B cell (primary cell): ENCODE measurements at regions of chr16 and their contacts with region 1.

Region 1: GRCh38 chr16:56700195-56700594 is 17.9 kb downstream of the MT1X start:
- DNase-seq: no peak
- ATAC-seq: no peak
- H3K4me3 ChIP-seq: no peak overlapping the region
- H3K4me3 Mint-ChIP-seq: no peak overlapping the region
- H3K27ac ChIP-seq: no peak overlapping the region
- H3K27ac Mint-ChIP-seq: no peak overlapping the region
- H3K4me1 ChIP-seq: peaks cover 0 to 4% of the 10 kb centered on the region in 2 donors
- H3K4me1 Mint-ChIP-seq: peaks cover 5% of the 10 kb centered on the region
- H3K27me3 ChIP-seq: peaks cover 0 to 1% (median 0%) of the 10 kb centered on the region in 4 experiments
- H3K27me3 Mint-ChIP-seq: peaks cover 3% of the 10 kb centered on the region
- CTCF ChIP-seq: no peak

Region 2: DNA sequence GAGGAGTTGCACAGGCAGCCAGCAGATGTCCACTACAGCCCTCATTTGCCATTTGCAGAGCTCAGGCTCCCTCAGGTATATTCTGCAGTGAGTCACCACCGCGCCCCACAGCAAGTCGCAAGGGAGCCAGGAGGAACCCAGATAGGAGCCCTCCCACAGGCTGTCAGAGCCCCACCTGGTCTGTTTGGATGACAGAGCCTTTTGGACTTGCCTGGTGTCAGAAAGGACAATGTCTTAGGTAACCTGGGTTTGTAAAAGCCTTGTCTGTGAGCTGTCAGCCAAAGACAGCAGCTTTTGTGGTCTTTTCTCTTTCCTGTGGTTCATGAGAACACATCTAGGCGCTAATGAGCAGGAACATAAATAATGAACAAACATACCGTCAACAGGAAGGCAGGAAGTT is 438.0 kb before region 1 on chr16:
- CTCF ChIA-PET with region 1: no interaction called
- POLR2A ChIA-PET with region 1: no interaction called
- intact Hi-C with region 1: no loop called
- DNase-seq: no peak
- ATAC-seq: no peak
- H3K4me3 ChIP-seq: no peak overlapping the region
- H3K4me3 Mint-ChIP-seq: no peak overlapping the region
- H3K27ac ChIP-seq: no peak overlapping the region
- H3K27ac Mint-ChIP-seq: no peak overlapping the region
- H3K4me1 ChIP-seq: peaks cover 0 to 5% of the 10 kb centered on the region in 2 donors
- H3K4me1 Mint-ChIP-seq: peaks cover 5% of the 10 kb centered on the region
- H3K27me3 ChIP-seq: peaks cover 0 to 7% (median 0%) of the 10 kb centered on the region in 4 experiments
- H3K27me3 Mint-ChIP-seq: peaks cover 9% of the 10 kb centered on the region
- CTCF ChIP-seq: no peak

Region 3: GRCh38 chr16:56356276-56357240 is 343.6 kb before region 1 on chr16:
- CTCF ChIA-PET with region 1: interaction called, 7 read pairs
- POLR2A ChIA-PET with region 1: no interaction called
- intact Hi-C with region 1: loop called (anchors 1 kb)
- DNase-seq: peak; percentile 67
- ATAC-seq: peak; percentile 81
- H3K4me3 ChIP-seq: peak overlapping the region; percentile 32 to 75 (median 50)
- H3K4me3 Mint-ChIP-seq: peak overlapping the region; percentile 93
- H3K27ac ChIP-seq: peak overlapping the region in 1 of 2 donors; percentile 69
- H3K27ac Mint-ChIP-seq: peak overlapping the region; percentile 46
- H3K4me1 ChIP-seq: peaks cover 4 to 14% of the 10 kb centered on the region in 2 donors
- H3K4me1 Mint-ChIP-seq: peaks cover 21% of the 10 kb centered on the region
- H3K27me3 ChIP-seq: no peaks in the 10 kb centered on the region
- H3K27me3 Mint-ChIP-seq: peaks cover 3% of the 10 kb centered on the region
- CTCF ChIP-seq: peak; percentile 86

Region 4: GRCh38 chr16:56519459-56520250 is 180.5 kb before region 1 on chr16 and contains the start of gene BBS2:
- CTCF ChIA-PET with region 1: interaction called, 50 read pairs
- POLR2A ChIA-PET with region 1: interaction called, 3 read pairs
- intact Hi-C with region 1: no loop called
- DNase-seq: peak; percentile 94
- ATAC-seq: peak; percentile 90
- H3K4me3 ChIP-seq: peak within 1 kb of the TSS; percentile 64 to 97 (median 92)
- H3K4me3 Mint-ChIP-seq: peak within 1 kb of the TSS; percentile 90
- H3K27ac ChIP-seq: peak within 1 kb of the TSS; percentile 58 to 80
- H3K27ac Mint-ChIP-seq: peak within 1 kb of the TSS; percentile 89
- H3K4me1 ChIP-seq: peaks cover 9 to 18% of the 10 kb centered on the region in 2 donors
- H3K4me1 Mint-ChIP-seq: peaks cover 38% of the 10 kb centered on the region
- H3K27me3 ChIP-seq: no peaks in the 10 kb centered on the region
- H3K27me3 Mint-ChIP-seq: no peaks in the 10 kb centered on the region
- CTCF ChIP-seq: no peak
- total RNA-seq, gene BBS2: 63.4 and 69.6 TPM in 2 replicates

Region 5: GRCh38 chr16:56608043-56608875 is 91.9 kb before region 1 on chr16 and contains the start of gene MT2A:
- CTCF ChIA-PET with region 1: interaction called, 18 read pairs
- POLR2A ChIA-PET with region 1: interaction called, 4 read pairs
- intact Hi-C with region 1: loop called (anchors 1 kb)
- DNase-seq: peak; percentile 85
- ATAC-seq: peak; percentile 87
- H3K4me3 ChIP-seq: peak within 1 kb of the TSS; percentile 60 to 77 (median 73)
- H3K4me3 Mint-ChIP-seq: peak within 1 kb of the TSS; percentile 97
- H3K27ac ChIP-seq: peak within 1 kb of the TSS in 1 of 2 donors; percentile 12
- H3K27ac Mint-ChIP-seq: peak within 1 kb of the TSS; percentile 88
- H3K4me1 ChIP-seq: peaks cover 21 to 41% of the 10 kb centered on the region in 2 donors
- H3K4me1 Mint-ChIP-seq: peaks cover 37% of the 10 kb centered on the region
- H3K27me3 ChIP-seq: no peaks in the 10 kb centered on the region
- H3K27me3 Mint-ChIP-seq: peaks cover 4% of the 10 kb centered on the region
- CTCF ChIP-seq: no peak
- total RNA-seq, gene MT2A: 6.7 and 14.4 TPM in 2 replicates

Region 6: GRCh38 chr16:56681939-56682702 is 18.1 kb before region 1 on chr16 and contains the start of gene MT1X:
- CTCF ChIA-PET with region 1: interaction called, 17 read pairs
- POLR2A ChIA-PET with region 1: no interaction called
- intact Hi-C with region 1: loop called (anchors 1 kb)
- DNase-seq: peak; percentile 76
- ATAC-seq: peak; percentile 98
- H3K4me3 ChIP-seq: peak within 1 kb of the TSS; percentile 55 to 74 (median 59)
- H3K4me3 Mint-ChIP-seq: peak within 1 kb of the TSS; percentile 95
- H3K27ac ChIP-seq: peak within 1 kb of the TSS in 1 of 2 donors; percentile 55
- H3K27ac Mint-ChIP-seq: peak within 1 kb of the TSS; percentile 81
- H3K4me1 ChIP-seq: peaks cover 14 to 15% of the 10 kb centered on the region in 2 donors
- H3K4me1 Mint-ChIP-seq: peaks cover 21% of the 10 kb centered on the region
- H3K27me3 ChIP-seq: peaks cover 0 to 14% (median 4%) of the 10 kb centered on the region in 4 experiments
- H3K27me3 Mint-ChIP-seq: peaks cover 10% of the 10 kb centered on the region
- CTCF ChIP-seq: no peak
- total RNA-seq, gene MT1X: 13.0 and 17.2 TPM in 2 replicates

Region 7: DNA sequence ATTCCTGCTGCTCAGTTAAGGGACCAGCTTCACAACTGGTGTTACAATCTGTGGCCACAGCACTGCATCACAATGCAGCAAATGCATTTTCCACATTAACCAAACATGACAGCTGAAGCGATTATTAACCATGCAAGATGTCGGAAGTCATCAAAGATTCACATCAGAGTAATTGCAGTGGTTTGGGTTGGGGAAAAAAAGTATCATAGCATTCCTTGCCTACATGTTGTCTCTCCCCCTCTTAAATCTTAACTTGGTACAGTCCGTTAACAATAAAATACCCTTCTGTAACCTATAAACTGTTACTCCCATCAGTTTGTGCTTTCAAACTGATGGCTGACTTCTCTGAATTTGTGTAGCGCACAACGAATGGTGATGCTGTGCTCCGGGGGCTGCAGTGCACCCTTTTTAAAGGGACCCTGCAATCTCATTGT is 81.3 kb after region 1 on chr16:
- CTCF ChIA-PET with region 1: no interaction called
- POLR2A ChIA-PET with region 1: no interaction called
- intact Hi-C with region 1: no loop called
- DNase-seq: no peak
- ATAC-seq: no peak
- H3K4me3 ChIP-seq: no peak overlapping the region
- H3K4me3 Mint-ChIP-seq: no peak overlapping the region
- H3K27ac ChIP-seq: no peak overlapping the region
- H3K27ac Mint-ChIP-seq: no peak overlapping the region
- H3K4me1 ChIP-seq: no peaks in the 10 kb centered on the region
- H3K4me1 Mint-ChIP-seq: no peaks in the 10 kb centered on the region
- H3K27me3 ChIP-seq: no peaks in the 10 kb centered on the region
- H3K27me3 Mint-ChIP-seq: no peaks in the 10 kb centered on the region
- CTCF ChIP-seq: no peak